ENCODE measurements at regions of chr1 and their contacts with region 1.

Region 1: DNA sequence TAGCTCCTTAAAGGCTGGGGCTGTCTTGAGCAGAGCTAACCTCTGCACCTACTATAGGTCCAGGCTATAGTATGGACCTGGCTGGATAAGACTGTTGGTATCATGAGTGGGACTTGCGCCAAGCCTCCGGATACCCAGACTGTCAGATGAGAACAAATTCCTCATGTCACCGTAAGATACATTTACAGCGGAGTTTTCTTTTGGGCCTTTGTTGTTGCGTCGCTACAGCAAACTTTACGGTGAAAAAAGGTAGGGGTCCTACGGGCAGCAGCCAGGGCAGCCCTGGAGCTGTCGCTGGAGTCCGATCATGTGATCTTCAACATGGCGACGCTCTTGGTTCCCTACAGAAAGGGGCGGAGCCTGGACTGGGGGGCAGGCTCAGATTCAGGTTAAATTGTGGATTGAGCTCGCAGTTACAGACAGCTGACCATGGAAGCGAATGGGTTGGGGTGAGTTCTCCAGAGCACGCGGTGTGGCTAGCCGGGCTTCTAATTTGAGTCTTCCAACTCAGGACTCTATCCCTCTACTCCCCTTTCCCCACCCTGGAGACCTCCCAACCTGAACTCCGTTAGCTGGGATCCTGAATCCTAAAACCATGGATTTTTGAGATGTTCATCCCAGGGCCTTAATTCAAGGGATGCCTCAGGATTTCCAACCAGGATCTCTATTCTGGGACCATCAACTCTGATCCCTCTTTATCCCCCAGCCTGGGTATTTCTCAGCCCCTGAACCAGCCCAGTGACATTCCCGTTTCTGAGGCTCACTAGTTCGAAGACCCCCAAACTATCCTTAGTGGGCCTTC is at the start of gene UROD:
- DNase-seq: peak; percentile 94
- CTCF ChIP-seq: no peak

Region 2: DNA sequence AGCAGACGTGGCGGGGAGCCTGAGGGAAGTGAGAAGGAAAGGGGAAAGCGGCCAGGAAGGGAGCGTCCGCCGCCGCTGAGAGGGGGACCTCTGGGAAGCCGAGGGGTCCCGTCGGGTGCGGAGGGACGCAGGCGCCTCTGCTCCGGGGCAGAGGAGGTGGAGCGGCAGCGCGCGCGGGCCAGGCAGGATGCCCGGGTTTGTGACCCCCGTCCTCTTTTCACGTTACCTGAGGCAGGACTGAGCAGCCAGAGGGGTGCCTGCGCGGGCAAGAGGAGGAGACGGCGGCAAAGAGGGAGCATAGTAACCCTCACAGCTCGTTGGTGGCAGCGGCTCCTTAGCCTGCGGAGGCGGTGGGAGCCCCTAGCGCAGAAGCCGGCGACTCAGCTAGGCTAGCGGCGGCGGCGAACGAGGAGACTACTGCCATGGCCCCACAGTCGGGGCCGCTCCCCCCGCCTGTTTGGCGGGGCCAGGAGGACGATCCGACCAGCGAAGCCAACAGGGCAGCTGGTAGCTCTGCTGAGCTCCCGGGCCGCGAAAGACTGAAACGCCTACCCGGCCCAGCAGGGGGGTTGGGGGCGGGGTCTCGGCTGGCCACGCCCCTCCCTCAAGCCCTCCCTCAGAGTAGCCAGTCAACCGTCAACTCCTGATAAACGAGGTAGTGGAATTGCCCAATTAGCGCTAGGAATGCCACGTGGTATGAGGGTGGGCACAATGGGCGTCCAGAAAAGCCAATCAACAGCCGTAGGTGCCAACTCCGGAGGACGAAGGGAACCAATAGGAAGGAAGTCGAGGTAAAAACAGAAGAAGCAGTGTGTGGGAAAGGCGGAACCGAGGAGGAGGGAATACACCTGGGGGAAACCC is 478.8 kb after region 1 on chr1 and contains the start of gene TESK2:
- in situ Hi-C with region 1: loop called (anchors 25 kb)
- DNase-seq: peak; percentile 95
- CTCF ChIP-seq: no peak

Measured in GM13977 (cell line).